ENCODE measurements at regions of chr20 and their contacts with region 1.

Region 1: GRCh38 chr20:59122062-59122919 is 41.3 kb upstream of the ZNF831 start:
- DNase-seq: peak; percentile 30
- H3K4me3 Mint-ChIP-seq: peak overlapping the region; percentile 60
- H3K27ac Mint-ChIP-seq: peak overlapping the region; percentile 96
- H3K4me1 Mint-ChIP-seq: peaks cover 66% of the 10 kb centered on the region
- H3K27me3 Mint-ChIP-seq: peaks cover 7% of the 10 kb centered on the region

Region 2: GRCh38 chr20:59149651-59150504 is 27.6 kb after region 1 on chr20:
- CTCF ChIA-PET with region 1: interaction called, 17 read pairs
- DNase-seq: peak; percentile 87
- H3K4me3 Mint-ChIP-seq: peak overlapping the region; percentile 29
- H3K27ac Mint-ChIP-seq: peak overlapping the region; percentile 98
- H3K4me1 Mint-ChIP-seq: peaks cover 87% of the 10 kb centered on the region
- H3K27me3 Mint-ChIP-seq: peaks cover 12% of the 10 kb centered on the region

Region 3: GRCh38 chr20:59165891-59166709 is 43.8 kb after region 1 on chr20:
- CTCF ChIA-PET with region 1: interaction called, 14 read pairs
- DNase-seq: peak; percentile 54
- H3K4me3 Mint-ChIP-seq: peak overlapping the region; percentile 80
- H3K27ac Mint-ChIP-seq: peak overlapping the region; percentile 95
- H3K4me1 Mint-ChIP-seq: peaks cover 88% of the 10 kb centered on the region
- H3K27me3 Mint-ChIP-seq: no peaks in the 10 kb centered on the region

Region 4: GRCh38 chr20:59289994-59290393 is 167.7 kb after region 1 on chr20:
- CTCF ChIA-PET with region 1: no interaction called
- DNase-seq: no peak
- H3K4me3 Mint-ChIP-seq: no peak overlapping the region
- H3K27ac Mint-ChIP-seq: no peak overlapping the region
- H3K4me1 Mint-ChIP-seq: peaks cover 3% of the 10 kb centered on the region
- H3K27me3 Mint-ChIP-seq: peaks cover 44% of the 10 kb centered on the region